ENCODE measurements at regions of chr4 and their contacts with region 1.

Region 1: GRCh38 chr4:31727030-31727429 is 1006.9 kb downstream of the PCDH7 start:
- DNase-seq: no peak
- H3K4me3 ChIP-seq: no peak overlapping the region
- H3K27ac ChIP-seq: no peak overlapping the region
- H3K4me1 ChIP-seq: no peaks in the 10 kb centered on the region
- H3K27me3 ChIP-seq: no peaks in the 10 kb centered on the region
- CTCF ChIP-seq: no peak

Region 2: DNA sequence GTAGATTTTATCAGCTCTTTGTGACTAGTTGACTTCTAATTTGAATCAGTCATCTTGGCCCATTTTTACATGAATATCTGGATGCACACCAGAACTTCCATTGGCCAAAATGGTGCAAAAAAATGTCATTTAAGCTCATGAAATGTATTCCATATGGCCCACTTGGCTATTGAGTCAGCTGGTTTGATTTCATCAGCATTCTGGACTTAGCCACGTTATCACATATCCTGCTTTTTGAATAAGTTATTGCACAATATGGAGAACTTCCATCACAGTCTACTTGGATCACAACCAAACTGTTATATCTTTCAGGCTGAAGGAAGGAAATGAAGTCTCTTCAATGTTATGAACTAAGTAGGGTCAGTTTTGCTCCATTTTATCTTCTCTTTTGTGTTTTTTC is 366.2 kb before region 1 on chr4:
- CTCF ChIA-PET with region 1: no interaction called
- POLR2A ChIA-PET with region 1: no interaction called
- intact Hi-C with region 1: no loop called
- DNase-seq: no peak
- H3K4me3 ChIP-seq: no peak overlapping the region
- H3K27ac ChIP-seq: no peak overlapping the region
- H3K4me1 ChIP-seq: no peaks in the 10 kb centered on the region
- H3K27me3 ChIP-seq: no peaks in the 10 kb centered on the region
- CTCF ChIP-seq: no peak

Region 3: DNA sequence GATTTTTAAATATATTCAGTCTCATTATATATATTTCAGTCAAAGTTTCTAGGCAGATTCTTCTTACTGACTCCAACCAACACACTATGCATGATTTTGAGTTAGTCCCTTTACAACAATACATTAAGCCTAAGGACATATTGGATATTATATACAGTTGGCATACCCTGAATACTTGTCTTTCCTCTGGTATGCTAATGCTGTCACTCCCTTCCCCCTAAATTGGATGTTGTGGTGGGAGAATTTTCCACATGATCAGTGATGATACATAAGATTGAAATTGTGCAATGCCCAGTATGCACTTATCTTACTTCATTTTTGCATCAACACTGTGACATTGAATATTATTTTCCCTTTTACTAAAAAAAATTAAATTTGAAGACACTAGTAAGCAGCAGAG is 71.7 kb before region 1 on chr4:
- CTCF ChIA-PET with region 1: no interaction called
- POLR2A ChIA-PET with region 1: no interaction called
- intact Hi-C with region 1: no loop called
- DNase-seq: no peak
- H3K4me3 ChIP-seq: no peak overlapping the region
- H3K27ac ChIP-seq: no peak overlapping the region
- H3K4me1 ChIP-seq: no peaks in the 10 kb centered on the region
- H3K27me3 ChIP-seq: no peaks in the 10 kb centered on the region
- CTCF ChIP-seq: no peak

Region 4: DNA sequence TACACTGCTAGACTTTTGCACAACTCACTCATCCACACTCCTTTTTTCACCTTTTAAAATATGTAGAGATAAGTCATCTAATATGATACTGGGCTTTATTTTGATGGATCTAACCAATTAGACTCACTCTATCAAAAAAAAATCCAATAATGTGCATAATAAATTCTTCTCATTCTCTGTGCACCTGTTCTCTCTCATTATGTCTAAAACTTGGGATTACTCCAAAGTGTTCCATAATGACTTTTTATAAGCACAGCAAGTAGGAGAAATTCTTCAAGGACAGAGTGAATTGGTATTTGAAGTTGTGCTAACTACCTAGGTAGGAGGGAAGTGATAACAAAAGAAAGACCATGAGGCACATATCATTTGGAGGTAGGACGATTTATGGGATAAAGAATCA is 431.9 kb after region 1 on chr4:
- CTCF ChIA-PET with region 1: no interaction called
- POLR2A ChIA-PET with region 1: interaction called, 11 read pairs
- intact Hi-C with region 1: no loop called
- DNase-seq: no peak
- H3K4me3 ChIP-seq: no peak overlapping the region
- H3K27ac ChIP-seq: no peak overlapping the region
- H3K4me1 ChIP-seq: no peaks in the 10 kb centered on the region
- H3K27me3 ChIP-seq: no peaks in the 10 kb centered on the region
- CTCF ChIP-seq: no peak